Vagina (tissue), 2 donors: ENCODE measurements at regions of chr21 and their contacts with region 1.

Region 1: DNA sequence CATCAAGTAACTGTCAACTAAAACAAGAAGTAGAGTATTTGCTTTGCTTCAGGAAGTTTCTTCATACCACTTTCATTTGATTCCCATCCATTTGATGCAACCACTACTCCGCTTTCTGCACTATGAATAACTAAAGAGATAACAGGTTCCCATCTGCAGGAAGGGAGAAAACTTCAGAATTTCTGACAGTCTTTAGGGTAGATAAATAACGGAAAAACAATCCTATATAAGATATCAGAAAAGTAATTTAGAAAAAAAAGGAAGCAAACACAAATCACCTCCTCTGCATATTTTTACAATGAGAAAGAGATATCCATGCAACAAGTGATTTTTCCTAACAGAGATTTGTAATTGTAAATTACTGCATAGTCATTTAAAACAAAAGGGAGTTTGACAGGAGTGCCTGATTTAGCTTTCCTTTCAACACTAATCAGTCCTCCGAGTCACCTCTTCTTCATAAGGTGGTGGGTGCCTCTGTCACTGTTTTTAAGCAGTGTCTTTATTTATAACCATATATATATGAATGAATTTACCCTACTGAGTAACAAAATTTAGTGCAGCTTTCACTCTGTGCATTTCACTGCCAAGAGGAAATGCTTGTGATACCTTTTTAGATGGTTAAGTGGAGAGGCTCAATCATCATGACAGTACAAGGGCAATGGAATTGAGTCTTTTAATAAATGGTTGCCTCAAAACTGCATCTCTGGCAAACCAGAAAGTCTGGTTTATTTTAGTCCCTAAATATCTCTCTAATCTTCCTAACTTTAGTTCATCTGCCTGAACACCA is 1920.4 kb downstream of the MRPL39 start:
- DNase-seq: no peak
- H3K4me3 ChIP-seq: no peak overlapping the region
- H3K27ac ChIP-seq: no peak overlapping the region
- H3K4me1 ChIP-seq: no peaks in the 10 kb centered on the region
- H3K27me3 ChIP-seq: no peaks in the 10 kb centered on the region
- CTCF ChIP-seq: no peak
- POLR2A ChIP-seq: no peak

Region 2: GRCh38 chr21:22925032-22925431 is 761.9 kb before region 1 on chr21:
- intact Hi-C with region 1: loop called (anchors 5 kb)
- DNase-seq: no peak
- H3K4me3 ChIP-seq: no peak overlapping the region
- H3K27ac ChIP-seq: no peak overlapping the region
- H3K4me1 ChIP-seq: no peaks in the 10 kb centered on the region
- H3K27me3 ChIP-seq: no peaks in the 10 kb centered on the region
- CTCF ChIP-seq: no peak
- POLR2A ChIP-seq: no peak

Region 3: DNA sequence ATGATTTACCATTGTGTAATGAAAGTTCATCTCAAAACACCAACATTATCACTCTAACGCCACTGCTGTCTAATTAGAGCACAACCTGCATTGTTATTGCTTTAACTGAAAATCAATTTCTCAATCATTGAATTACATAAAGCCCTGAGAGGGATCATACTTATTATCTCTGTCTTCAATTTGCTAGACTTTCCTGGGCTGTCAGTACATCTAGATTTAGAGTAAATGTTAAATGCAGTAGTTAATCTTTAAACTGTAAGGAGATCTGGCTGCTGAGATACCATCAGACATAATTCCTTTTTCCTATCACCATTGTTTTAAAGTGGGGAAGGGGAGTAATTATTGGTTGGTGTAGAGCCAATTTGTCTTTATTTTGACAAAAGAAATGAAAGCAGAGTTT is 74.7 kb before region 1 on chr21:
- intact Hi-C with region 1: no loop called
- DNase-seq: no peak
- H3K4me3 ChIP-seq: no peak overlapping the region
- H3K27ac ChIP-seq: no peak overlapping the region
- H3K4me1 ChIP-seq: no peaks in the 10 kb centered on the region
- H3K27me3 ChIP-seq: no peaks in the 10 kb centered on the region
- CTCF ChIP-seq: no peak
- POLR2A ChIP-seq: no peak

Region 4: GRCh38 chr21:23725576-23725975 is 38.6 kb after region 1 on chr21:
- intact Hi-C with region 1: no loop called
- DNase-seq: no peak
- H3K4me3 ChIP-seq: no peak overlapping the region
- H3K27ac ChIP-seq: no peak overlapping the region
- H3K4me1 ChIP-seq: no peaks in the 10 kb centered on the region
- H3K27me3 ChIP-seq: no peaks in the 10 kb centered on the region
- CTCF ChIP-seq: no peak
- POLR2A ChIP-seq: no peak